Left ventricle myocardium inferior (tissue), 1 donor: ENCODE measurements at regions of chr19 and their contacts with region 1.

Region 1: DNA sequence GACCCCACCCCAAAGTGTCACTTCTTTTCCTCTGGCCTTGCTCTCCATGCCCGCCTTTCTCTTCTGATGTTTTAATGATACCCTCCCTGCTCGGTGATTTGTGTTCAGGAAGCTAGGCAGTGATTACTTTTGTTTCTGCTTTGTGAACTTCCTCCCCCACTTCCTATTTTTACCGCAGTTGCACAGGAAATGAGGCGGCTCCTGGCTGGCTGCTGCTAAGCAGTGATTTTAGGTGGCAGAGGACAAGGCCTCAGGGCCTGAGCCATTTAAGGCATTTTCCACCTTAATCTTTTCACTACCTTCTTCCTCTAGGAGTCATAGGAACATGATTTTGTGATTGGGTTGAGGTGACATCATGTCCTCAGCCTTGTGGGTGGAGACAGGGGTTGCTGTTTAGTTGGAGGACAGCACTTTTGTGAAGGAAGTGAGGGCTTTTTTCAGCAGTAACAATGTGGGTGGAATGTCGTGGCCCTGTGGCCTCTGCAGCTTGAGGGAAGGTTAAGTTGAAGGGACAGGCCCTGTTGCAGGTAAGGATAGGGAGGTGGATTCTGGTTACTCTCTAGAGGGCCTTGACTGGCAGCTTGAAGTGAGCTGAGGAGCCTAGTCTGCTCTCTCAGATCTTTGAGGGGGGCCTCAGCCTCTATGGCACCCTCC is 15.7 kb downstream of the GARRE1 start:
- DNase-seq: peak; percentile 43
- H3K4me3 ChIP-seq: peak overlapping the region; percentile 56
- H3K27ac ChIP-seq: peak overlapping the region; percentile 88
- H3K4me1 ChIP-seq: peaks cover 89% of the 10 kb centered on the region
- H3K27me3 ChIP-seq: no peaks in the 10 kb centered on the region
- CTCF ChIP-seq: no peak

Region 2: DNA sequence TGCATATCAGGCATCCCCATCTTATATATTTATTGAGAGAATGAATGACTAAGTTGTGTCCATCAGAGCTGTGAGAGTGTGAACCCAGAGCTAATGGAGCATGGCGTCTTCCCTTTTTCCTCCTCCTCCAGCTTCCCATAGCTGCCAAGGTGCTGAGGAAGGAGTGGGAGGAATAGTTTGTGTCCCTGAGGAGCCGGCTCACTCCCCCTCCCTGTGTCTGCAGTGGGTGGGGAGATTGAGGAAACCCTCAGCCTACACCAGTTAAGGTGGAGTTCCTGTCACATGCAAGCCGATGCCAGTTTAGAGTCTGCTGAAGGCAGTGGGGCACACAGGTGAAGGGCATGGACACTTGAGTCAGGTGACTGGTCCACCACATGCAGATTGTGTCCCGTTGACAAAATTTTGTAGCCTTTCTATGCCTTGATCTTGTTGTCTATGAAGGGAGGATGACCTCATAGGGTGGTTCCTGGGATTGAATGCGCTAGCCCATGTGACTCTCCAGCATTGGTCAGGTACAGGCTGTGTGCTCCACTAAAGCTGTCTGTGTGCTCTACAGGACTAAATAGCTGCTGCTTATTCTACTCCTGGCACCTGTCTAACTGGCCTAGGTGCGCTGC is 47.3 kb after region 1 on chr19:
- intact Hi-C with region 1: loop called (anchors 10 kb)
- DNase-seq: no peak
- H3K4me3 ChIP-seq: no peak overlapping the region
- H3K27ac ChIP-seq: peak overlapping the region; percentile 77
- H3K4me1 ChIP-seq: peaks cover 76% of the 10 kb centered on the region
- H3K27me3 ChIP-seq: no peaks in the 10 kb centered on the region
- CTCF ChIP-seq: no peak